A673 (cell line): ENCODE measurements at regions of chr15 and their contacts with region 1.

Region 1: GRCh38 chr15:36152936-36153335 is 426.5 kb upstream of the CDIN1 start:
- DNase-seq: no peak
- H3K4me3 ChIP-seq: no peak overlapping the region
- H3K27ac ChIP-seq: no peak overlapping the region
- H3K4me1 ChIP-seq: no peaks in the 10 kb centered on the region
- H3K27me3 ChIP-seq: no peaks in the 10 kb centered on the region
- CTCF ChIP-seq: no peak

Region 2: GRCh38 chr15:34472947-34473346 is 1680.0 kb before region 1 on chr15:
- CTCF ChIA-PET with region 1: no interaction called
- POLR2A ChIA-PET with region 1: no interaction called
- intact Hi-C with region 1: no loop called
- DNase-seq: no peak
- H3K4me3 ChIP-seq: no peak overlapping the region
- H3K27ac ChIP-seq: no peak overlapping the region
- H3K4me1 ChIP-seq: no peaks in the 10 kb centered on the region
- H3K27me3 ChIP-seq: peaks cover 9% of the 10 kb centered on the region
- CTCF ChIP-seq: no peak

Region 3: DNA sequence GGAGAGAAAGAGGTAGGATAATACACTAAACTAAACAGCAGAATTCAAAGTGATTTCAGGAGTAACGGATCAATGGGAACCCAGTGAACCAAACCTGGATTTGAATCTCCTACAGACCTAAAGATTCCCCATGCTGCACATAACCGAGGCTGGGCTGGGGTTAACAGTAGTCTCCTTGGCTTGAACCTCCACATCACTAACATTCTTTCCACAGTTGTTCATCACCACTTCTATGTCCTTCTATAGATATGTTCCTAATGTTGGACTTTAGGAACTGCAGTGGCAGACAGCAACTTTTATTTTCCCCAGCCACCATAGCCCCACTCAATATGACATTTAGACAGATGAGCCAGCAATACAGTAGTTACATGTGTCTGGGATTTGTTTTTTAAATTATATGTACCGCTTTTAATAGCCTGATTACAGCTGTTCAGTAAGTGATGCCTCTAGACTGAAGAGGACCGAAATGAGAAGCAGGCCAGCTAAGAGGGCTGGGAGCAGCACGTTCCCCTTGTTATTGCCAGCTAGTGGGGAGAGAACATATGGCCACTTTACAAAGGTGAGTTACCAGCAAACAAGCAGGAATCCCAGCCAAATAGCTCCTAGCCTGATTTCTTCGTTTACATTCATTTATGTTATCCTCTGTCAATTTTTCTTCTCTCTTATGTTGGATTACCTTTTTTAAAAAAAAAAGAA is 46.1 kb before region 1 on chr15:
- CTCF ChIA-PET with region 1: no interaction called
- POLR2A ChIA-PET with region 1: no interaction called
- intact Hi-C with region 1: loop called (anchors 5 kb)
- DNase-seq: no peak
- H3K4me3 ChIP-seq: no peak overlapping the region
- H3K27ac ChIP-seq: no peak overlapping the region
- H3K4me1 ChIP-seq: no peaks in the 10 kb centered on the region
- H3K27me3 ChIP-seq: no peaks in the 10 kb centered on the region
- CTCF ChIP-seq: no peak